ENCODE measurements at regions of chr20 and their contacts with region 1.

Region 1: GRCh38 chr20:9609887-9610502 is 95.6 kb downstream of the LAMP5 start:
- DNase-seq: peak; percentile 28 to 49
- ATAC-seq: peak; percentile 60

Region 2: DNA sequence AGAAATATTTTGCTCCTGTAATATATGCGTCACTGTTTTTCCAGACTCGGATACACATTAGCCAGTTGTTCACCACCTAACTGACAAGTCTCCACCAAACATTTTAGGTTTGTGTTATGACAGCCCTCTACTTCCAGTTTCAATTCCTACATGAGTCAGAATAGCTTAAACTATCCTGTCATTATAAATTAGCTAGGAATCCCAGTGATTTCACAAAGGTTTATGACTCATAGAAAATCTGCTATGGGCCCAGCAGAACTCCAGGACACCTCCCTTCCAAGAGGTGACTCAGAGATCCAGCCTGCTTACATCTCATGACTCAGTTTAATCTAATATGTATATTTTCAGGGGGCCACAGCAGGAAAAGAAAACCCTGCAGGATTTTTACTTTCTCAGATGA is 558.5 kb before region 1 on chr20:
- intact Hi-C with region 1: no loop called
- DNase-seq: no peak
- ATAC-seq: peak; percentile 34

Region 3: DNA sequence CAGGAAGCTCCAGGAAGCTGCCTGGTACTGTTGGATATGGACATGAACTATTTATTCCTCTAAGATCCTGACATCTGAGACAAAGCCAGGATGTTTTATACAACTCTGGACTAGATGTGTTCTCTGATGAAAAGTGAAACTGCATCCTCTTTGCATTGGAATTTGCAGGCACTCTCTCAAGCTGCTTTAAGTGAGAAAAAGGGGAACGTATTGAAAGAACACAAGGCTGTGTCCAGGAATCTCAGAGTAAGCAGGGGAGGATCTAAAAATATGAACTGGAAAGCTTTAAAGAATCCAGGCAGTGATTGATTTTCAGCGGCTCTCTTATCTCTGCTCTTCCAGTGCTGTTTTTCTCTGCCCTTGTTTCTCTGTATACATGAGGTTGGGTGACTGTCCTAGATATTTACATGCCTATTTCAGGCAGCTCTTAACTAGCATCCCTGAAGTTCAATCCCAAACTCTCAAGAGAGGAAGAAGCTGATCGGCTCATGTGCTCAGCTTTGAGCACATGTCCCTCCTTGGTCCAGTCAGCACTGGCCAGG is 347.3 kb before region 1 on chr20:
- intact Hi-C with region 1: no loop called
- DNase-seq: no peak
- ATAC-seq: no peak

Region 4: GRCh38 chr20:9407805-9408421 is 202.1 kb before region 1 on chr20:
- intact Hi-C with region 1: loop called (anchors 5 kb)
- DNase-seq: peak in 1 of 2 donors; percentile 52
- ATAC-seq: peak; percentile 86